AG04450 (cell line): ENCODE measurements at regions of chr2 and their contacts with region 1.

Region 1: GRCh38 chr2:68031542-68032160 is 31.2 kb downstream of the C1D start:
- DNase-seq: peak; percentile 15
- H3K4me3 ChIP-seq: no peak overlapping the region
- H3K27ac ChIP-seq: no peak overlapping the region
- H3K27me3 ChIP-seq: no peaks in the 10 kb centered on the region
- CTCF ChIP-seq: peak; percentile 69

Region 2: GRCh38 chr2:67733517-67733916 is 298.1 kb before region 1 on chr2:
- CTCF ChIA-PET with region 1: interaction called, 20 read pairs
- POLR2A ChIA-PET with region 1: no interaction called
- DNase-seq: no peak
- H3K4me3 ChIP-seq: no peak overlapping the region
- H3K27ac ChIP-seq: no peak overlapping the region
- H3K27me3 ChIP-seq: no peaks in the 10 kb centered on the region
- CTCF ChIP-seq: peak; percentile 49

Region 3: DNA sequence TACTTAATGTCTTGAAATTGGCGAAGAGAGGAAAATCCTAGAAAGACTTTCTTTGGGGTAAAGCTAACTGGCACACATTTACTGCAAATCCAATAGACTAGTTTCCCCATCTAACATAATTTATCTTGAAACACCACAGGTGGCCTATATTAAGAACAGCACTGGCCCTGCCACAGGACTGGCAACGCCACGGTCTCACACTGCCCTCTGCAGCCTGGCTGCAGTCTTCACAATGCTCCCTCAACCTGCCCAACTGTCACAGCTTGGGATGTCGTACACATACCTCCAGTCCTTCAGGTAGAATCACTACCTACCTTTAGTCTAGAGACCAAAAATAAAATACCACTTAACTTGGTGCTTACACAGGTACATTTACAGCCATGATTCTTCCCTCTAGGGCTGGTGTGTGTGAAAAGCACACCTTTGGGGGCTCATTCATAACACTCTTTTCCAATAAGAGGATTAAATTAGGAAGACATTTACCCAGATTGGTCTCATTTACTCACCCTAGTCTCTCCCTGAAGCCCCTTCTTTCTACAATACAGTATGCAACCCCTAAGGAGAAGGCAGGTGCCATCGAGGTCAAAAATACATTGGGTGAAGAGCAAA is 191.1 kb before region 1 on chr2:
- CTCF ChIA-PET with region 1: interaction called, 12 read pairs
- POLR2A ChIA-PET with region 1: interaction called, 4 read pairs
- DNase-seq: peak; percentile 59
- H3K4me3 ChIP-seq: no peak overlapping the region
- H3K27ac ChIP-seq: no peak overlapping the region
- H3K27me3 ChIP-seq: no peaks in the 10 kb centered on the region
- CTCF ChIP-seq: peak; percentile 95

Region 4: GRCh38 chr2:67846370-67847070 is 185.1 kb before region 1 on chr2:
- CTCF ChIA-PET with region 1: interaction called, 25 read pairs
- POLR2A ChIA-PET with region 1: interaction called, 4 read pairs
- DNase-seq: peak; percentile 96
- H3K4me3 ChIP-seq: peak overlapping the region; percentile 21; the same call in 1 of the 2 replicates
- H3K27ac ChIP-seq: peak overlapping the region; percentile 40
- H3K27me3 ChIP-seq: no peaks in the 10 kb centered on the region
- CTCF ChIP-seq: peak; percentile 83

Region 5: DNA sequence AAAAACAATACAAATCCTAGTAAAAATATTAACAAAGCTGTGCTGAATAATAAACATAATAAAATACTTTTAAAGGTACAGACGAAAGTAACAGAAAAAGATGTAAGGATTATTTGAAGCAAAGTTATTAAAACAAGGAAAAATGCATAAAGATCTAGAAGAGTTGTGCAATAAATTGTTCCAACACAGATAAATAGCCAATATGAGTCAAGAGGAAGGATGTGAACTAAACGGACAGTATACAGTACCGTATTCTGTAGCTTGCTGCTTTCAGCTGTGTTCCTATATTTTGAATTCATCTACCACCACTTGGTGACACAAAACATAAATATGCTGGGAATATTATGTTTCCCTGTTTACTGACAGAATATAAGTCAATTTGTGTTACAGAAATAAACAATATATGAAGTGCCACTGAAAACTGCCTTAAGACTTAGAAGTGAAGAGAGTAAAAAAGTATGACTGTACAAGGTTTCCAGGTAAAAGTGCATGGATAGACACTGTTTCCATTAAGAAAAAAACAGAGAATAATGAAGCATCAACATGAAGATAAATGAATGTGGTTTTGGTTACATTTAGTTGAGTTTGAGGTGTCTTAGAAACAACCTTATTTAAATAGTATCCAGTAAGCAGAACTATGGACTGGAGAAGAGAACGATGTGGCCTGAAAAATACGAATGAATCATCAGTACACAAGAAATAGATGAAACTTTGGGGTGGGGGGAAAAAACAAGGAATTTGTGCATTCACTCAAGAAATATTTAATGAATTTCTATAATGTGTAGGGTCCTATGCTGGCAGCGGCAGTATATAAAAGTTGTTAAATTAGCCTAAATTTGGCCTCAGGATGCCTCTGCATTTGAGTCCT is 207.5 kb after region 1 on chr2:
- CTCF ChIA-PET with region 1: no interaction called
- POLR2A ChIA-PET with region 1: no interaction called
- DNase-seq: no peak
- H3K4me3 ChIP-seq: no peak overlapping the region
- H3K27ac ChIP-seq: no peak overlapping the region
- H3K27me3 ChIP-seq: no peaks in the 10 kb centered on the region
- CTCF ChIP-seq: no peak

Region 6: DNA sequence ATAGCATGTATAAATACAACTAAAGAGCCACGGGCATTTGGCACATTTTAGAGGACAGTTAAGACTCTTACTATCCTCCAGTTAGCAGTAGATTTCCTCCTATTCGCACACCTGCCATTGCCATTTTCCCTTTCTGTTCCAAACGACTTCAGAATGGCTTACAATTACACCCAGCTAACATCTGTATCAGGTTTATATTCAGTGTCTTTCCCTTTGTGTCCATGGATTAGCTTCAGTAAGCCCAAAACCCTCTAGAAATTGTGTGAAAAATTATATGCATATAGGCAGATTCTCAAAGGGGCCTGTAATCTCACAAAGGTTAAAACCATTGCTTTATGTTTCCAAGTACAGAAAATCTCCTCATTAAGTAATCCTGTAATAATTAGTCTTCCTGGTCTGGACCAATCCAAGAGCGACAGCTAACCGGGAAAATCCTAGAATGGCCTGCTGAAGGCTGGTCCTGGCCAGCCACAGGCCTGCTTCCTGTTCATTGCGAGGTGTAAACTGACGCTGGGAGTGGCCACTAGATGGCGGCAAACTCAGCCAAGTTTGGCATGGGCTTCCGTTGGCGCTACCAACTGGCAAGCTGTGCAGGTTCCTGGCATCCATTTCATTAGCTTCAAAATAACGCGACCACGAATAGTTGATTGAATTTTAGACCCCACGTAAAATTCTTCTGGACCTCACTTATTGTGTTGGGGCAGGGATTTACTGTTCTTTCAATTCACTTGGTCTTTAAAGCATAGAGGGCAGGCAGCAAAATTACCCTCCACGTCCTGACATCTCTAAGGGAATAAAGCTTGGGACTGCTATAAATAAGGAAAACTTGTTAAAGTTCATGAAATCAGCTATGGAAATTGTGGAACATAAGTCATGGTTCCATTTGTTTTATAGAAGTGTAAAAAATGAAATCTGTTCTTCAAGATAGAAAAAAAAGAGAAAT is 720.0 kb after region 1 on chr2:
- CTCF ChIA-PET with region 1: no interaction called
- POLR2A ChIA-PET with region 1: no interaction called
- DNase-seq: peak; percentile 68
- H3K4me3 ChIP-seq: no peak overlapping the region
- H3K27ac ChIP-seq: no peak overlapping the region
- H3K27me3 ChIP-seq: no peaks in the 10 kb centered on the region
- CTCF ChIP-seq: peak; percentile 95